ENCODE measurements at regions of chr18 and their contacts with region 1.

Region 1: GRCh38 chr18:2655178-2655953 is at the start of gene SMCHD1:
- DNase-seq: peak; percentile 90
- H3K4me3 ChIP-seq: peak within 1 kb of the TSS; percentile 60 to 90 (median 88)
- H3K27ac ChIP-seq: peak within 1 kb of the TSS; percentile 95 to 99 (median 98)
- H3K4me1 ChIP-seq: peaks cover 12 to 50% (median 32%) of the 10 kb centered on the region in 4 donors
- H3K27me3 ChIP-seq: no peaks in the 10 kb centered on the region
- CTCF ChIP-seq: no peak
- EP300 ChIP-seq: no peak
- POLR2A ChIP-seq: peak; percentile 87
- total RNA-seq, gene SMCHD1: 41.0 to 179 (median 136) TPM

Region 2: GRCh38 chr18:2564373-2564772 is 91.0 kb before region 1 on chr18:
- in situ Hi-C with region 1: loop called in 1 of 4 experiments (anchors 10 kb)
- intact Hi-C with region 1: no loop called
- DNase-seq: no peak
- H3K4me3 ChIP-seq: no peak overlapping the region
- H3K27ac ChIP-seq: no peak overlapping the region
- H3K4me1 ChIP-seq: peaks cover 0 to 9% (median 2%) of the 10 kb centered on the region in 4 donors
- H3K27me3 ChIP-seq: no peaks in the 10 kb centered on the region
- CTCF ChIP-seq: no peak
- EP300 ChIP-seq: no peak
- POLR2A ChIP-seq: no peak